SK-N-SH (cell line): ENCODE measurements at regions of chr2 and their contacts with region 1.

Region 1: GRCh38 chr2:130797493-130798435 is 39.0 kb upstream of the ARHGEF4 start:
- DNase-seq: peak; percentile 93
- H3K4me3 ChIP-seq: peak overlapping the region; percentile 79 to 85
- H3K27ac ChIP-seq: peak overlapping the region; percentile 68 to 85
- H3K4me1 ChIP-seq: peaks cover 0 to 11% of the 10 kb centered on the region in 2 experiments; a peak in 1 of 4 replicates
- H3K27me3 ChIP-seq: no peaks in the 10 kb centered on the region
- CTCF ChIP-seq: peak; percentile 73
- EP300 ChIP-seq: no peak; a peak in 1 of 4 replicates
- RAD21 ChIP-seq: peak; percentile 90

Region 2: GRCh38 chr2:130776550-130776949 is 21.2 kb before region 1 on chr2:
- CTCF ChIA-PET with region 1: interaction called, 10 read pairs
- POLR2A ChIA-PET with region 1: no interaction called
- DNase-seq: no peak
- H3K4me3 ChIP-seq: no peak overlapping the region
- H3K27ac ChIP-seq: no peak overlapping the region
- H3K4me1 ChIP-seq: no peaks in the 10 kb centered on the region
- H3K27me3 ChIP-seq: no peaks in the 10 kb centered on the region
- CTCF ChIP-seq: no peak
- EP300 ChIP-seq: no peak
- RAD21 ChIP-seq: peak; percentile 58

Region 3: GRCh38 chr2:130824492-130825061 is 26.8 kb after region 1 on chr2:
- CTCF ChIA-PET with region 1: interaction called, 57 read pairs
- POLR2A ChIA-PET with region 1: interaction called, 6 read pairs
- DNase-seq: no peak
- H3K4me3 ChIP-seq: no peak overlapping the region
- H3K27ac ChIP-seq: peak overlapping the region in 1 of 2 experiments; percentile 41; a peak in 1 of 4 replicates
- H3K4me1 ChIP-seq: peaks cover 4 to 12% of the 10 kb centered on the region in 2 experiments; a peak in 2 of 4 replicates
- H3K27me3 ChIP-seq: no peaks in the 10 kb centered on the region
- CTCF ChIP-seq: no peak
- EP300 ChIP-seq: no peak
- RAD21 ChIP-seq: no peak

Region 4: DNA sequence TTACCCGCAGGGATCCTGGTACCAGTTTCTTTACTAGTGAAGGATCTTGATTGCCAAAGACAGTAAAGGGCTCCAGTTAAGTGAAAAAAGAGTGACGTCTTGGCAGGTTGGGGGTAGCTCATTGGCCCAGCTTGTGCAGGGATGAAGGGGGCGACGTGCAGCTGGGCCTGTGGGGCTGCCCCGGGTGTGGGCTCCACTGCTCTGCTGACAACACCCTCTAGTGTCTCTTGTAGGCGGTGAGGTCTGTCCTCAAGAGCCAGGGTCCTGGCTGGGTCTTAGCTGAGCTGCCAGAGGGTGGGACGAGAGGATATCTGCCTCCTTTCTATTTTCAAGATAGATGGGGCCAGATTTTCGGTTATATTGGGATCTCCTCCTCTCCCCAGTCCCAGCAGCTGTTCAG is 45.0 kb after region 1 on chr2:
- CTCF ChIA-PET with region 1: interaction called, 19 read pairs
- POLR2A ChIA-PET with region 1: no interaction called
- DNase-seq: no peak
- H3K4me3 ChIP-seq: no peak overlapping the region
- H3K27ac ChIP-seq: no peak overlapping the region
- H3K4me1 ChIP-seq: no peaks in the 10 kb centered on the region; a peak in 1 of 4 replicates
- H3K27me3 ChIP-seq: no peaks in the 10 kb centered on the region; the same call in 1 of the 2 replicates
- CTCF ChIP-seq: no peak
- EP300 ChIP-seq: no peak
- RAD21 ChIP-seq: no peak

Region 5: DNA sequence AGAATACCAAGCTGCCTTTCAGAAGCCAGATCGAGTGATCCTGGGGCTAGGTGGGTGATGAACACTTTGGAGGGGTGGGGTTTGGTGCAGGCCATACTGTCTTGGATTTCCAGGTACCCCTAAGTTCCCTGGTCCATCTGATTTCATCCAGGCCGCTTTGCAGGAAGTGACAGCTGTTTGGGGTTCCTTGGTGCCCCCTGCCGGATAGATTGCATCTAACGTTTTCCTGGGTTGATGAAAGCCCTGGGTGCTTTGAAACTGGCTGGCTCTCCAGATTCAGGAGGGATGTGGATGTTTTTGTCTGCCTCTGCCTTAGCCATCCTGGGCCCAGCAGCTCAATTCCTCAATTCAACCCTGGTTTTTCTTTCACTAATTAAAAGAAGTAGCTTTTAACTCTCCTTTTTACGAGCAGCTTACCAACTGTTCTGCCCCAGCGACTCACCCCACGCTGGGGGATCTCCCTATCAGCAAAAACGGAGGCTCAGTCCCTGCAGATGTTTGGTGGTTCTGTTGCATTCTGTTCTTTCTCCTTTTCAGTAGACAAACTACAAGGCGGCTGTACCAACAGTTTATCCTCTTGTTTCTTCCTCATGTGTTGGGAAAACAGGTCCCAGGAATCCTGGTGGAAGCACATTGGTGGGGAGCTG is 76.1 kb after region 1 on chr2:
- CTCF ChIA-PET with region 1: interaction called, 249 read pairs
- POLR2A ChIA-PET with region 1: interaction called, 4 read pairs
- DNase-seq: peak; percentile 82
- H3K4me3 ChIP-seq: no peak overlapping the region
- H3K27ac ChIP-seq: no peak overlapping the region
- H3K4me1 ChIP-seq: no peaks in the 10 kb centered on the region
- H3K27me3 ChIP-seq: no peaks in the 10 kb centered on the region
- CTCF ChIP-seq: peak; percentile 72
- EP300 ChIP-seq: no peak
- RAD21 ChIP-seq: peak; percentile 83

Region 6: DNA sequence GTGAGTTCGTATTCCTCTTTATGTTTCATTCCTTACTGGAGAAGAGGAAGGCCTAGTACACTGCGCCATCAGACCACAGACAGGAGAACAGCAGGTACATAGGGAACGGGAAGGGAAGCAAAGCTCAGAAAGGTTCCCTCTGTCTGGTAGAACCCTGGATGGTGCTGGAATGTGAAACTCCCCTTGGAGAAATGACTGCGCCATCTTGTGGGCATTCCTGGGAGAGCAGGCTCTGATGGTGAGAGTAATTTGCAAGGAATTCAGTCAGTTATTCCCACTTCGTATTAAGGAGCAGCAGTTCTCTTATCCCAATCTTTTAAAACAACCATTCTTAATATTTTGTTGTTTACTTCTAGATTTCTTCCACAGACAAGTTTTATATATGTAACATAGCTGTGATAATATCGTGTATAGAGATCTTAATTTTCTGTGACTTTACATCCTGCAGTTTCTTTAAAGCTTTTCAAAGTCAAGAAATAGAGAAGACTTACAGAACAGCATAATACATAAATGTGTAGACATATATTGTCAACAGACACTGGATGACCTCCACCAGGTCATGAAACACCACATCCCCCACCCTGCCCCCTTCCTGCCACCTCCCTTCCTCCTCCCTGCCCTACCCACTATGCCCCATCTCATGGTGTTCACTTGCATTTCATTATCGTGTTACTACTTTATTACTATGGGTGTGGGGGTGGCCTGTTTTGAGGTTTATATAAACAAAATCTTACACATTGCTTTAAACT is 122.8 kb after region 1 on chr2:
- CTCF ChIA-PET with region 1: interaction called, 63 read pairs
- POLR2A ChIA-PET with region 1: no interaction called
- DNase-seq: peak; percentile 87
- H3K4me3 ChIP-seq: peak overlapping the region in 1 of 2 experiments; percentile 23; a peak in 1 of 4 replicates
- H3K27ac ChIP-seq: no peak overlapping the region
- H3K4me1 ChIP-seq: no peaks in the 10 kb centered on the region
- H3K27me3 ChIP-seq: no peaks in the 10 kb centered on the region
- CTCF ChIP-seq: peak; percentile 89
- EP300 ChIP-seq: no peak
- RAD21 ChIP-seq: peak; percentile 79